CD8-positive, alpha-beta T cell (primary cell): ENCODE measurements at regions of chr2 and their contacts with region 1.

Region 1: DNA sequence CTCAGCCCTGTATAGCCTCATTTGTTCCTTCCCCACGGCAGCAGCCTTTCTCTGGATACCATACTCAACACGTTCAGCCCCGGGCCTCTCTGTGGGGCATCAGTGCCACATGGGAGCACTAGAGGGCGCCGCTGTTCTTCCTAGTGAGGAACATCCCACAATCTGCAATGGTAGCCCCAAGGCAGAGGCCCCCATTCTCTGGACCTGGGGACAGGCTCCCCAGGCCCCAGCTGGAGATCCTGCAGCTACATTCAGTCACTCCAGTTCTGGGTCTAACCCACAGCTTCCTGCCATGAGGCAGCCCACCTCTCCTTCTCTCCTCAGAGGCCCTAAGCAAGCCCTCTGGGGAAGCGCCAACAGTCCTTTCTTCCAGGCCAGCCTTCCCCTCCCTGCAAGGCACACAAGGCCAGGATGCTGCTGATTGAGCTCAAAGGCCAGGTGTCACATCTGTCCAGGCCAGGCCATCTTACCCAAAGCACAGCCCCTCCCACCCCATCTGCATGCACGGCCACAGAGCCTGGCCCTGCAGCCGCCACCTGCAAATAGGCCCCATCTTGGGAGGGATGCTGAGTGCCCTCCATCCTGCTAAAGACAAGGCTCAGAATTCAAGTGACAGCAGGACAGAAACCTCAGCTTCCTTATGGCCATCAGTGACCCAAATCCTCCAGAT is 14.3 kb upstream of the SFXN5 start:
- DNase-seq: peak; percentile 69 to 87 (median 82)
- ATAC-seq: peak; percentile 99
- H3K4me3 ChIP-seq: no peak overlapping the region
- H3K4me3 Mint-ChIP-seq: no peak overlapping the region
- H3K27ac ChIP-seq: no peak overlapping the region
- H3K27ac Mint-ChIP-seq: no peak overlapping the region
- H3K4me1 ChIP-seq: no peaks in the 10 kb centered on the region
- H3K4me1 Mint-ChIP-seq: no peaks in the 10 kb centered on the region
- H3K27me3 ChIP-seq: no peaks in the 10 kb centered on the region
- H3K27me3 Mint-ChIP-seq: no peaks in the 10 kb centered on the region
- CTCF ChIP-seq: peak; percentile 70

Region 2: GRCh38 chr2:72515696-72516095 is 570.1 kb before region 1 on chr2:
- CTCF ChIA-PET with region 1: no interaction called
- POLR2A ChIA-PET with region 1: no interaction called
- intact Hi-C with region 1: no loop called
- DNase-seq: no peak
- ATAC-seq: no peak
- H3K4me3 ChIP-seq: no peak overlapping the region
- H3K4me3 Mint-ChIP-seq: no peak overlapping the region
- H3K27ac ChIP-seq: no peak overlapping the region
- H3K27ac Mint-ChIP-seq: no peak overlapping the region
- H3K4me1 ChIP-seq: no peaks in the 10 kb centered on the region
- H3K4me1 Mint-ChIP-seq: no peaks in the 10 kb centered on the region
- H3K27me3 ChIP-seq: no peaks in the 10 kb centered on the region
- H3K27me3 Mint-ChIP-seq: no peaks in the 10 kb centered on the region
- CTCF ChIP-seq: no peak

Region 3: DNA sequence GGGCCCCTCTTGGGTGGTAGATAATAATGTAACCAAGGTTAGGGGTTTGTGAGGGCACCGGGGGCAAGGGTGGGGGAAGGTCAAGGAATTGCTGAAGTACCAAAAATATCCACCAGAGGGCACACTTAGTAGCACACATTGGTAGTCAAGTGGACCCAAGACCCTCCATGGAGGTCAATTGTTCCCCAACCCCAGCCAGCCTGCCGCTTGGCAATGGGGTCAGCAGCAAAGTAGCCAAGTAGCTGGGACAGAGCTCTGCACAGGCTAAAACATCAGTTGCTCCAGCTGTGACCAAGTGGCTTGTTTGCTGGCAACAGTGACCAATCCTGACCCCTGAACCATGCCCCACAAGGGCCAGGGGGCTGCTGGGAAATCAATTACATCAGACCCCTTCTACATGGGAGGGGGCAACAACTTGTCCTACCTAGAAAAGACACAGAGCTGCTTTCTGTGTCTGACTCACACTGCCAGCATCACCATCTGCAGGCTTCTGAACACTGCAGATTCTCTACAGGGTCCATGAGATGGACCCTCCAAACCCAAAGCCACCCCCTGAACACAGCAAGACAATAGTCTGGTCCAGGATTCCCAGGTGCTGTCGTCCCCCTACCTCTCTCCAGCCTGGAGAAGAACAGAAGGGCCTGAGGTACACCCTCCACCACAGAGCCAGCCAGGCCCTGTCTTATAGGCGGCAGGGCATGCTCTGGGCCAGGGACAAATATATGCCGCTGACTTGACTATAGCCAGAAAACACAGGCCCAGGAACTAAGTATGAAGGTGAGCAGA is 92.5 kb before region 1 on chr2:
- CTCF ChIA-PET with region 1: interaction called, 10 read pairs
- POLR2A ChIA-PET with region 1: no interaction called
- intact Hi-C with region 1: no loop called
- DNase-seq: peak in 8 of 9 experiments; percentile 7 to 72 (median 54)
- ATAC-seq: peak; percentile 46
- H3K4me3 ChIP-seq: no peak overlapping the region
- H3K4me3 Mint-ChIP-seq: no peak overlapping the region
- H3K27ac ChIP-seq: no peak overlapping the region
- H3K27ac Mint-ChIP-seq: no peak overlapping the region
- H3K4me1 ChIP-seq: no peaks in the 10 kb centered on the region
- H3K4me1 Mint-ChIP-seq: no peaks in the 10 kb centered on the region
- H3K27me3 ChIP-seq: no peaks in the 10 kb centered on the region
- H3K27me3 Mint-ChIP-seq: no peaks in the 10 kb centered on the region
- CTCF ChIP-seq: peak; percentile 83

Region 4: DNA sequence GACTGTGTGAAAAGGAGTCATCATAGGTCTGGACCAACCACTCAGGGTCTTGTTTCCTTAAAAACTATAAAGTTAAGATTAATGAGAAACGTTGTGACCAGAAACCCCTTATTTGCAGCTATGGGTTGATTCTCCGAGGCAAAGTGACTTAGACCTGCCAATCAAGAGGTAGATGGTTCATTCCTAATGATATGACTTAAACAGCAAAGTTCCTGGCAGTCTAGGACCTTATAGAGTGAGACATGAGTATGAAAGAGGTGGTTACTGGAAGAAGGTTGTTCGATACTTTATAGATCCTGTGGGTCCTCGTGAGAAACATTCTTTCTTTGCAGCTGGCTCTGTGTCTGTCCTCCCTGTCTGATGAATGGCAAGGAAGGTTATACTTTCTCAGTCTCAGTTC is 22.4 kb before region 1 on chr2:
- CTCF ChIA-PET with region 1: interaction called, 12 read pairs
- POLR2A ChIA-PET with region 1: no interaction called
- intact Hi-C with region 1: no loop called
- DNase-seq: no peak
- ATAC-seq: no peak
- H3K4me3 ChIP-seq: no peak overlapping the region
- H3K4me3 Mint-ChIP-seq: no peak overlapping the region
- H3K27ac ChIP-seq: no peak overlapping the region
- H3K27ac Mint-ChIP-seq: no peak overlapping the region
- H3K4me1 ChIP-seq: no peaks in the 10 kb centered on the region
- H3K4me1 Mint-ChIP-seq: peaks cover 24% of the 10 kb centered on the region
- H3K27me3 ChIP-seq: no peaks in the 10 kb centered on the region
- H3K27me3 Mint-ChIP-seq: no peaks in the 10 kb centered on the region
- CTCF ChIP-seq: no peak

Region 5: DNA sequence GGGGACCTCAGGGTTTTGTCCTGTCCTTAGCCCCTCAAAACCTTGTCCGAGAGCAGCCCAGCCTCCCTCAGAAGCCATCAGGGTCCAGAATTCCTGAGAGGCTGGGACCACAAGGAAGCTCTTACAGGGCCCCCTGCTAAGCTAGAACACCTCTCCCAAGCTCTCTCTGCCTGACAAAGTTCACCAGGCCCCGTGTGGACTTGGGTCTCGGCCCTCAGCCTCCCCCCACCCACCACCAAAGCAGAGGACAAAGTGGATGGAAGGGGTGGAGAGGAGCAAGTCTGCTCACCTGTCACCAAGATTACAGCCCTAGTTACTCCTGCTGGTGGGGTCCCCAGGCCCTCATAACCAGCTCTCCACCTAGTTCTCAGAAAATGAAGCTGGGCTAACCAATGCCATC is 10.1 kb after region 1 on chr2:
- CTCF ChIA-PET with region 1: interaction called, 28 read pairs
- POLR2A ChIA-PET with region 1: no interaction called
- intact Hi-C with region 1: no loop called
- DNase-seq: no peak
- ATAC-seq: no peak
- H3K4me3 ChIP-seq: no peak overlapping the region
- H3K4me3 Mint-ChIP-seq: no peak overlapping the region
- H3K27ac ChIP-seq: no peak overlapping the region
- H3K27ac Mint-ChIP-seq: no peak overlapping the region
- H3K4me1 ChIP-seq: no peaks in the 10 kb centered on the region
- H3K4me1 Mint-ChIP-seq: peaks cover 2% of the 10 kb centered on the region
- H3K27me3 ChIP-seq: no peaks in the 10 kb centered on the region
- H3K27me3 Mint-ChIP-seq: no peaks in the 10 kb centered on the region
- CTCF ChIP-seq: no peak

Region 6: GRCh38 chr2:73112913-73113633 is 27.2 kb after region 1 on chr2 and contains the start of gene RAB11FIP5:
- CTCF ChIA-PET with region 1: interaction called, 13 read pairs
- POLR2A ChIA-PET with region 1: no interaction called
- intact Hi-C with region 1: no loop called
- DNase-seq: peak; percentile 43 to 90 (median 73)
- ATAC-seq: peak; percentile 90
- H3K4me3 ChIP-seq: peak within 1 kb of the TSS; percentile 68 to 70
- H3K4me3 Mint-ChIP-seq: peak within 1 kb of the TSS; percentile 82
- H3K27ac ChIP-seq: peak within 1 kb of the TSS; percentile 32 to 37
- H3K27ac Mint-ChIP-seq: no peak within 1 kb of the TSS
- H3K4me1 ChIP-seq: peaks cover 15% of the 10 kb centered on the region
- H3K4me1 Mint-ChIP-seq: peaks cover 18% of the 10 kb centered on the region
- H3K27me3 ChIP-seq: peaks cover 0 to 3% of the 10 kb centered on the region in 2 experiments
- H3K27me3 Mint-ChIP-seq: no peaks in the 10 kb centered on the region
- CTCF ChIP-seq: no peak
- total RNA-seq, gene RAB11FIP5: 4.7 to 10.7 TPM

Region 7: DNA sequence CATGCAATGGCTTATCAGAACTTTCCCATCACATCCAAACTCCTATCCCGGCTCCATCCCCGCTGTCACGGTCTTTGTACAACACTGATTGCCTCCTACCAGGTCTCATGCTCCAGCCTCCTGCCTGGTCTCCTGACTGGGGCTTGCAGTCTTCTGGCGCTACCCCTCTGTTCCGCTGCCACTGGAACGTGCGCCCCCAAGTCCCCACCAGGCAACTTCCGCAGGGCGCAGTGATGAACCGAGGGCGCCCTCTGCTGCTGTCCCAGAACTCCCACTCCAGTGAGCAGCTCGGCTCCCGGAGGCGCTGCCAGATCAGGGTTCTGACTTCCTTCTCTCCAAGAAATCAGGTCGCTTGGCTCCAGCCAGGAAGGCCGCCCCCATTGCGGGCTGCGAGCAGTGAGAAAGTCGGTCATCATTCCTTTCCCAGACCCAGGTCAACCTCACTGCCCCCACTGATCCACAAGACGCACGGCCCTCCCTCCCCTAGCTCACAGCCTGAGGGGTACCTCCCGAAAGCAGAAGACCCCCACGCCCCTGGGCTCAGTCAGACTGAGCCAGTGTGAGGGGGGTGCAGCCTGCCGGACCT is 70.8 kb after region 1 on chr2:
- CTCF ChIA-PET with region 1: interaction called, 65 read pairs
- POLR2A ChIA-PET with region 1: no interaction called
- intact Hi-C with region 1: loop called in 1 of 2 experiments (anchors 1 kb)
- DNase-seq: peak in 6 of 9 experiments; percentile 12 to 58 (median 46)
- ATAC-seq: no peak
- H3K4me3 ChIP-seq: no peak overlapping the region
- H3K4me3 Mint-ChIP-seq: no peak overlapping the region
- H3K27ac ChIP-seq: no peak overlapping the region
- H3K27ac Mint-ChIP-seq: no peak overlapping the region
- H3K4me1 ChIP-seq: no peaks in the 10 kb centered on the region
- H3K4me1 Mint-ChIP-seq: no peaks in the 10 kb centered on the region
- H3K27me3 ChIP-seq: peaks cover 0 to 10% of the 10 kb centered on the region in 2 experiments
- H3K27me3 Mint-ChIP-seq: peaks cover 49% of the 10 kb centered on the region
- CTCF ChIP-seq: no peak

Region 8: DNA sequence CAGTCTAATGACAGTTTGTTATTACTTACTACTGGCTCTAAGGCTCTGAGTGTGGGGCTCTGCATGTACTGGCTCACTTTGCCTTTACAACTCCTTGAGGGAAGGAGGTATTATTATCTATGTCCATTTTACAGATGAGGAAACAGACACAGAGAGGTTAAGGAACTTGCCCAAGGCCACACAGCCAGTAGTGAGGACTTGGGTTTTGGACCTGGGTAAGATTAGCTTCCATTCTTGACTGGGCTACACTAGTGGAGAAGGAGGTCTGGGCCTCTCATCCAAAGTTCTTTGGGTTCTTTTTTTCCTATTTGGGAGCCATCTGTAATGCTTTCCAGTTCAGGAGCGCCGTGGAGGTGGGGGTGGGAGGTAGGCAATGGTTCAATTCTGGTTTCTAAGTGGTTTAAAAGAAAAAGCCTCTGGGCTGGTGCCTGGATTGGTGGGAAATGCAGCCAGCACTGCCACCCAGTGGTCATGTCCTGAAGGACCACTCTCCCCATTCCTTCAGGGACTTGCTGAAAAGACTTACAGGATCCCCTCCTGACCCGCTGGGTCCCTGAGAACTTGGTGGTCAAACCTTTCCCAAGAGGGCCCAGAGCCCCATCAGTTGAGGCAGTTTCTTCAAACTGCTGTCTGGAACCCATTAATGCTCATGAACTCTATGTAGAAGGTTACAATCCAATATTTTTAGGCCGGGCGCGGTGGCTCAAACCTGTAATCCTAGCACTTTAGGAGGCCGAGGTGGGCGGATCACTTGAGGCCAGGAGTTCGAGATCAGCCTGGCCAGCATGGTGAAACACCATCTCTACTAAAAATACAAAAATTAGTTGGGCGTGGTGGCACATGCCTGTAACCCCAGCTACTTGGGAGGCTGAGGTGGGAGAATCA is 77.9 kb after region 1 on chr2:
- CTCF ChIA-PET with region 1: interaction called, 65 read pairs
- POLR2A ChIA-PET with region 1: no interaction called
- intact Hi-C with region 1: loop called (anchors 1 kb)
- DNase-seq: peak; percentile 31 to 77 (median 66)
- ATAC-seq: peak; percentile 86
- H3K4me3 ChIP-seq: no peak overlapping the region
- H3K4me3 Mint-ChIP-seq: no peak overlapping the region
- H3K27ac ChIP-seq: no peak overlapping the region
- H3K27ac Mint-ChIP-seq: no peak overlapping the region
- H3K4me1 ChIP-seq: no peaks in the 10 kb centered on the region
- H3K4me1 Mint-ChIP-seq: no peaks in the 10 kb centered on the region
- H3K27me3 ChIP-seq: no peaks in the 10 kb centered on the region
- H3K27me3 Mint-ChIP-seq: peaks cover 20% of the 10 kb centered on the region
- CTCF ChIP-seq: peak; percentile 78

Region 9: GRCh38 chr2:73404409-73404808 is 318.6 kb after region 1 on chr2:
- CTCF ChIA-PET with region 1: no interaction called
- POLR2A ChIA-PET with region 1: no interaction called
- intact Hi-C with region 1: no loop called
- DNase-seq: no peak
- ATAC-seq: no peak
- H3K4me3 ChIP-seq: no peak overlapping the region
- H3K4me3 Mint-ChIP-seq: no peak overlapping the region
- H3K27ac ChIP-seq: no peak overlapping the region
- H3K27ac Mint-ChIP-seq: no peak overlapping the region
- H3K4me1 ChIP-seq: no peaks in the 10 kb centered on the region
- H3K4me1 Mint-ChIP-seq: peaks cover 12% of the 10 kb centered on the region
- H3K27me3 ChIP-seq: no peaks in the 10 kb centered on the region
- H3K27me3 Mint-ChIP-seq: no peaks in the 10 kb centered on the region
- CTCF ChIP-seq: no peak

Region 10: DNA sequence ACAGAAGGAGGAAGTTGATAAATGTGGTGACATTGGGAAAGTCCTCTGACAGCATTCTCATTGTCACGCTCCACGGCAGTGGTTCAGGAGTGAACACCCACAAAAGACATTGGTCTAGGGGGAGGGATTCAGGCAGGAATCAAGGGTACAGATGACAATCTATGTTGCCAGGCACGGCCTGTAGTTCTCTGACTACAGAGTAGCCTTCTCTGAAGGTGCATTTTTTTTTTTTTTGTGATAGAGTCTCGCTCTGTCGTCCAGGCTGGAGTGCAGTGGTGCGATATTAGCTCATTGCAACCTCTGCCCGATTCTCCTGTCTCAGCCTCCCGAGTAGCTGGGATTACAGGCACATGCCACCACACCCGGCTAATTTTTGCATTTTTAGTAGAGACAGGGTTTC is 1100.2 kb after region 1 on chr2:
- CTCF ChIA-PET with region 1: no interaction called
- POLR2A ChIA-PET with region 1: no interaction called
- intact Hi-C with region 1: no loop called
- DNase-seq: peak in 4 of 9 experiments; percentile 18 to 82 (median 50)
- ATAC-seq: peak; percentile 59
- H3K4me3 ChIP-seq: no peak overlapping the region
- H3K4me3 Mint-ChIP-seq: no peak overlapping the region
- H3K27ac ChIP-seq: no peak overlapping the region
- H3K27ac Mint-ChIP-seq: no peak overlapping the region
- H3K4me1 ChIP-seq: no peaks in the 10 kb centered on the region
- H3K4me1 Mint-ChIP-seq: peaks cover 2% of the 10 kb centered on the region
- H3K27me3 ChIP-seq: no peaks in the 10 kb centered on the region
- H3K27me3 Mint-ChIP-seq: peaks cover 2% of the 10 kb centered on the region
- CTCF ChIP-seq: no peak